Heart left ventricle (tissue), 16 donors: ENCODE measurements at regions of chr17 and their contacts with region 1.

Region 1: DNA sequence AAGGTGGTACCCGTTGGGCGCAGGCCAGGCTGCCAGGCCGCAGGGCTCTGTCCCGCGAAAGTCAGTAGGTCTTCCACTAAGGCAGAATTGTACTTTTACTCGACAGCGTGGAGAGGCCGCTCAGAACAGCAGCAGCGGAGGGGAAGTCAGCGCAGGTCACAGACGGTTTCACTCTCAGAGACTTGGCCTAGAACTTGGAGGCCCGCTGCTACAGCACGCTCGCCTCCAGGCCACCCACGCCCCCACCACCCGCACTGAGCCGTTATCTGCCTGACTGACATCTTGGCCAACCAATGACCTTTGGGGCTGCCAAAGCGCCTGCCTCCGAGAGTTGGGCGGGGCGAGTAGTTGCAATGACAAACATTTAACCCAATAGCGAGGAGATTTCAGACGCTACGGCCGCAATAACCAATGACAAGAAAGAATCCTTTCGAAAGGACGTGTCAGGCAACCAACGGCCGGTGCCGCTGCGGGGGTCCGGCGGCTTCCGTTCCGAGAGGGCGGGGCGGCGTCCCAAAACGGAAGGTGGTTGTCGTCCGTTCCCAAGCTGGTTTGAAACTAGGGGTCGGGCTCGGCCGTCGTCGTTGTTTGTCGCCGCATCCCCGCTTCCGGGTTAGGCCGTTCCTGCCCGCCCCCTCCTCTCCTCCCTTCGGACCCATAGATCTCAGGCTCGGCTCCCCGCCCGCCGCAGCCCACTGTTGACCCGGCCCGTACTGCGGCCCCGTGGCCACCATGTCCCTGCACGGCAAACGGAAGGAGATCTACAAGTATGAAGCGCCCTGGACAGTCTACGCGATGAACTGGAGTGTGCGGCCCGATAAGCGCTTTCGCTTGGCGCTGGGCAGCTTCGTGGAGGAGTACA is at the start of gene DCAF7:
- DNase-seq: peak; percentile 98 to 100 (median 100)
- ATAC-seq: peak; percentile 97 to 99 (median 98)
- H3K4me3 ChIP-seq: peak within 1 kb of the TSS; percentile 66 to 99 (median 76)
- H3K27ac ChIP-seq: peak within 1 kb of the TSS; percentile 79 to 97 (median 90)
- H3K4me1 ChIP-seq: peaks cover 2 to 53% (median 38%) of the 10 kb centered on the region in 12 donors
- H3K27me3 ChIP-seq: no peaks in the 10 kb centered on the region
- CTCF ChIP-seq: peak in 1 of 12 donors; percentile 11
- POLR2A ChIP-seq: peak in 1 of 2 donors; percentile 62
- total RNA-seq, gene DCAF7: 30.2 to 61.8 (median 47.8) TPM

Region 2: DNA sequence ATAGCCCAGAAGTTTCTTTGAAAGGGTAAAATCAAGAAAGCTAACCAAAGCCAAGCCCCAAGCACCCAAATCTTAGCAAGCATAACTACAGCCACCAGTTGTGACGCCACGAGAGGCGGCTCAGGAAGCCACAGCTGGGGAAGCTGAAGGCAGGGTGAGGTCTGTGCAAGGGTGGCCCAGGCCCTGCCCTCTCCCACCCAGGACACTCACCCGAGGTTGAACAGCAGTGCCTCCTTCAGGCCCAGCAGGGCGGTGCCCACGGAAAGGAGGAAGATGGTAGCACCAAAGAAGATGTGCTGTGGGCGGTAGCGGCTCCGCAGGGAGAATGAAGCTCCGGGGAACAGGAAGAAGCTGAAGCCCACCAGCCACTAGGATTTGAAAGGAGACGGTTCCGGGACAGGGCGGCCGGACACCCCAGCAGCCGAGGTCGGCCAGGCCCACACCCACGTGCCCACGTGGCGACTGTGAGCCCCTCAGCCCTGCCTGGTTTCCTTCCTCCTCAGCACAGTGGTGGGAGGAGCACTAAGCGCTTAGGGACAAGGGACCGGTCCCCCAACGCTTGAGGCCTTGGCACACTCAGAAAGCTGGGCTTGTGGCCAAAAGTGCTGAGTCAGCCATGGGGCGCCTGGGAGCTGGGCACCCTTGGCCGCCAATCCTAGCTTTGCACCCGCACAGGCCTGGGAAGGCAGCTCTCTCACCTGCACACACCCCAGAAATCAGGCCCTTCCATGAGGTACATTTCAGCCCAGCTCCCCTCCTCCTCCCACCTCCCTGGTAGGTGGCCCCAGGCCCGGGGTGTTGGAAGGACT is 115.1 kb before region 1 on chr17:
- intact Hi-C with region 1: loop called in 2 of 10 experiments (anchors 2 to 10 kb)
- DNase-seq: peak; percentile 74 to 88 (median 81)
- ATAC-seq: peak; percentile 52 to 70 (median 67)
- H3K4me3 ChIP-seq: peak overlapping the region in 1 of 12 donors; percentile 39
- H3K27ac ChIP-seq: peak overlapping the region in 10 of 12 donors; percentile 8 to 74 (median 56)
- H3K4me1 ChIP-seq: peaks cover 8 to 81% (median 60%) of the 10 kb centered on the region in 12 donors
- H3K27me3 ChIP-seq: no peaks in the 10 kb centered on the region
- CTCF ChIP-seq: peak in 3 of 12 donors; percentile 6 to 24 (median 20)
- POLR2A ChIP-seq: no peak

Region 3: GRCh38 chr17:63445979-63446691 is 104.0 kb before region 1 on chr17 and contains the start of gene CYB561:
- intact Hi-C with region 1: loop called in 2 of 10 experiments (anchors 5 to 10 kb)
- DNase-seq: peak; percentile 68 to 89 (median 79)
- ATAC-seq: peak in 3 of 4 donors; percentile 23 to 85 (median 80)
- H3K4me3 ChIP-seq: peak within 1 kb of the TSS; percentile 34 to 84 (median 66)
- H3K27ac ChIP-seq: peak within 1 kb of the TSS; percentile 67 to 93 (median 88)
- H3K4me1 ChIP-seq: peaks cover 3 to 65% (median 38%) of the 10 kb centered on the region in 12 donors
- H3K27me3 ChIP-seq: no peaks in the 10 kb centered on the region
- CTCF ChIP-seq: peak; percentile 16 to 65 (median 52)
- POLR2A ChIP-seq: no peak
- total RNA-seq, gene CYB561: 4.8 to 19.2 (median 8.6) TPM

Region 4: GRCh38 chr17:63600569-63601438 is 50.6 kb after region 1 on chr17 and contains the start of gene TACO1:
- intact Hi-C with region 1: loop called in 3 of 10 experiments (anchors 2 to 5 kb)
- DNase-seq: peak; percentile 84 to 91 (median 85)
- ATAC-seq: peak; percentile 92 to 99 (median 98)
- H3K4me3 ChIP-seq: peak within 1 kb of the TSS; percentile 71 to 100 (median 90)
- H3K27ac ChIP-seq: peak within 1 kb of the TSS; percentile 66 to 96 (median 90)
- H3K4me1 ChIP-seq: peaks cover 0 to 24% (median 13%) of the 10 kb centered on the region in 12 donors
- H3K27me3 ChIP-seq: no peaks in the 10 kb centered on the region
- CTCF ChIP-seq: no peak
- POLR2A ChIP-seq: peak in 1 of 2 donors; percentile 77
- total RNA-seq, gene TACO1: 23.0 to 48.0 (median 40.6) TPM

Region 5: GRCh38 chr17:63675607-63676413 is 125.6 kb after region 1 on chr17:
- intact Hi-C with region 1: loop called in 1 of 10 experiments (anchors 5 kb)
- DNase-seq: peak in 4 of 5 donors; percentile 82 to 87 (median 86)
- ATAC-seq: peak; percentile 84 to 93 (median 92)
- H3K4me3 ChIP-seq: peak overlapping the region in 10 of 12 donors; percentile 7 to 47 (median 33)
- H3K27ac ChIP-seq: peak overlapping the region; percentile 43 to 94 (median 86)
- H3K4me1 ChIP-seq: peaks cover 3 to 55% (median 37%) of the 10 kb centered on the region in 12 donors
- H3K27me3 ChIP-seq: no peaks in the 10 kb centered on the region
- CTCF ChIP-seq: no peak
- POLR2A ChIP-seq: no peak